Activated B cell treated with CpG ODN at 0.5 μM for 24 hours (primary cell): ENCODE measurements at regions of chr4 and their contacts with region 1.

Region 1: GRCh38 chr4:26319467-26319948 is 1.3 kb upstream of the RBPJ start:
- DNase-seq: peak; percentile 88
- ATAC-seq: peak; percentile 72
- H3K4me3 Mint-ChIP-seq: peak overlapping the region; percentile 99
- H3K27ac Mint-ChIP-seq: peak overlapping the region; percentile 99
- H3K4me1 Mint-ChIP-seq: peaks cover 35% of the 10 kb centered on the region
- H3K27me3 Mint-ChIP-seq: no peaks in the 10 kb centered on the region
- CTCF ChIP-seq: no peak

Region 2: DNA sequence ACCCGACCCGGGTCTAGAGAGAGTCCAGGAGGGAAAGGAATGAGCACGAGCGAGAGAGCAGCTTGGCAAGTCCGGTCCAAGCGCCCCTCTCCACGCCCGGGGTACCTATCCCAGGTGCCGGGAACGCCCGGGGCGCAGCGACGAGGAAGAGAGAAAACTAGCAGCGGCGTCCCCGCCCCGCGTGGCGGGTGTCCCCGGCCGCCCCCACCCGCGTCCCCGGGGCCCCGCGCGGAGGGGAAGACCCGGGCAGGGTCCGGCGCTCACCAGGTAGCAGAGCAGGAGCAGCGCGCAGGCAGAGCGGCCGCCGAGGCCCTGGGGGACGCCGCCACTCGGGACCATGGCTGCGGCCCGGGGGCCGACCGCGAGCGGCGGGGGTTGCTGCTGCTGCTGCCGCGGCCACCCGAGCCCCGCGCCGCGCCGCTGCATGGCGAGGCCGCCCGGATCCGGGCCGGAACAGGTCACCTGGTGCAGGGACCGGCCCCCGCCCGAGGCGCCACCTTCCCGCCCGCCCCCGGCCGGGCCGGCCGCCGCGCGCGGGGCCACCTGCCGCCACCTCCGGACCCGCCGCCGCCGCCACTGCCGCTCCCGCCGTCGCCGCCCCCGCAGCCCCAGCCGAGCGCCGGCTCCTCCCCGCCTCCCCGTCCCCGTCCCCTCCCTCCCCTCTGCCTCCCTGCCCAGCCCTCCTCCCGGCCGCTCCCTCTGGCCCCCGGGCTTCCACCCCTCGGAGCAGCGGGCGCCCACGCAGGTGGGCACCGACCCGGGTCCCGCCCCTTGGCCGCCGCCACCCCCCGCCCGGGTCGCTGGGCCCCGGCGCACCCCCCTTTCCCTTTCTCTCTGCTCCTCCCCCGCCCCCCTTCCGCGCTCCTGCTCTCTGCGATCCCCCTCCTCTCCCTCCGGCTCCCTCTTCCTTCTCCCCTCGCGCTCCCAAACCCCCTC is 456.8 kb before region 1 on chr4 and contains the start of gene SEL1L3:
- CTCF ChIA-PET with region 1: no interaction called
- POLR2A ChIA-PET with region 1: interaction called, 13 read pairs
- intact Hi-C with region 1: loop called (anchors 2 kb)
- DNase-seq: peak; percentile 68
- ATAC-seq: peak; percentile 39
- H3K4me3 Mint-ChIP-seq: peak within 1 kb of the TSS; percentile 98
- H3K27ac Mint-ChIP-seq: peak within 1 kb of the TSS; percentile 99
- H3K4me1 Mint-ChIP-seq: peaks cover 84% of the 10 kb centered on the region
- H3K27me3 Mint-ChIP-seq: no peaks in the 10 kb centered on the region
- CTCF ChIP-seq: no peak
- total RNA-seq, gene SEL1L3: 102 and 113 TPM in 2 replicates

Region 3: DNA sequence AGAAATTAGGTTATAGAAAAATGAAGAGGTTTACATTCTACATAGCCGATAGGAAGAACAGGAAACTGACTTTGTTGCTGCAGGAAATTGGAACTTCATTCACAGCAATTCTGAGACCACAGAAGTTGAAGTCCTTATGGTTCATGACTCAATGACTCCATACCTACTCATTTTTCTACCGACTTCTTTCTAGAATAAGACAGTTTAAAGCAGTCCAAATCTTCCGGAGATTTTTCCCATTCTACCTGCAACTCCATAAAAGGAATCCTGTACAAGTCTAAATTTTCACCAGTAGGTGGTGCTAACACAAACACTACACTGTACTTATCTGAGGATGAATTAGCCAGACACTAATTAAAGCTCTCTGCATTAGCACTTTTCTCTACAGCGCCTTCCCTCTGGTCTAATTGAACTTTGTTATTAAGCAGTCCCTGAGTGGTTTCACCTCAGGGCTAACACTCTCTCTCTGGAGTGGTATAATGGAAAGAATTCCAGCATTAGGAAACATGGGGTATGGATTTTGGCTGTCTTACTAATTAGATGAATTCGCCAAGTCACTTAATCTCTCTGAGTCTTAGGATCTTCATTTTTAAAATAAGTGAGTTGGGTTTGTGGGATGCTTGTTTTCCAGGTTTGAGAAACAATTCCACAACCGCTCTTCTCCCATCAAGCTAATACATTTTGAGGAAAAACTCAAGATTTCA is 237.6 kb before region 1 on chr4:
- CTCF ChIA-PET with region 1: interaction called, 10 read pairs
- POLR2A ChIA-PET with region 1: interaction called, 8 read pairs
- intact Hi-C with region 1: loop called (anchors 1 kb)
- DNase-seq: no peak
- ATAC-seq: peak; percentile 52
- H3K4me3 Mint-ChIP-seq: no peak overlapping the region
- H3K27ac Mint-ChIP-seq: no peak overlapping the region
- H3K4me1 Mint-ChIP-seq: peaks cover 14% of the 10 kb centered on the region
- H3K27me3 Mint-ChIP-seq: peaks cover 3% of the 10 kb centered on the region
- CTCF ChIP-seq: no peak

Region 4: DNA sequence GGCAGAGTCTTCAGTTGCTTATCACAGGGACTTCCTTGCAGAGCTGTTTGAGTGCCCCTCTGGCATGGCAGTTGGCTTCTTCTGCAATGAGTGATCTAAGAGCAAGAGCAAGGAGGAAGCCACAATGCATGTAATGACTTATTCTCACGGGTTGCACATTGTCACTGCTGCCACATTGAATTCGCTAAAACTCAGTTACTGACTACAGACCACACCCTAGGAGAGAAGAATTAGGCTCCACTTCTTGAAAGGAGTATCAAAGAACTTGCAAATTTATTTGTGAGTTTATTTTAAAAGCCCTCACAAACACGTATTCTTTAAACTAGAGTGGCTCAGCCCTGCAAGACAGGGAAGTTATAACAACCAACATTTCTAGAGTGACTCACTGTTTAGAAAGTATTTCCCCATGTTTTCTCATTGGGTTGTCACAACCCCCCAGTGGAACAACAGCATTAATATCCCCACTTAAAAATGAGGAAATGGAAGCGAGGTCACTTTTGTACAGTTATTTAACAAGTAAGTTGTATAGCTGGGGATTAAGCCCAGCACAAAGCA is 31.1 kb before region 1 on chr4:
- CTCF ChIA-PET with region 1: no interaction called
- POLR2A ChIA-PET with region 1: interaction called, 14 read pairs
- intact Hi-C with region 1: loop called (anchors 1 kb)
- DNase-seq: no peak
- ATAC-seq: peak; percentile 80
- H3K4me3 Mint-ChIP-seq: no peak overlapping the region
- H3K27ac Mint-ChIP-seq: peak overlapping the region; percentile 59
- H3K4me1 Mint-ChIP-seq: peaks cover 13% of the 10 kb centered on the region
- H3K27me3 Mint-ChIP-seq: no peaks in the 10 kb centered on the region
- CTCF ChIP-seq: no peak

Region 5: DNA sequence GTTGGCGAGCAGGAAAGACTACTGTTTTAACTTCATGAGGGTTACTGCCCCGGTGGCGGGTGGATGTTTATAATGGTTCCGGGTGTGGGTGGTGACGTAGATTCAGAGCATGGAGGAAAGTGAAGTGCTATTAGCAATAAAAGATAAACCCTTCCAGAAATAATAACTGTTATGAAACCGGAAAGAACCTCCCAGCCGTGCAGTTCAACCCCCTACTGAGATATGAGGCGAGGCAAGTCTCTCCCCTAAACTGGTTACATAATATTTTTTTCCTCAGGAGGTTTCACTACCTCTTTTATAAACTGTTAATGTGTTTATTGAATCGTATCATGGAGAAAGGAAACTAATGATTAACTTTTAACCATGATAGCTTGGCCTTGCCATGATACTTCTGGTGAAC is 507.2 kb after region 1 on chr4:
- CTCF ChIA-PET with region 1: no interaction called
- POLR2A ChIA-PET with region 1: no interaction called
- intact Hi-C with region 1: loop called (anchors 1 kb)
- DNase-seq: peak; percentile 47
- ATAC-seq: peak; percentile 84
- H3K4me3 Mint-ChIP-seq: peak overlapping the region; percentile 59
- H3K27ac Mint-ChIP-seq: peak overlapping the region; percentile 88
- H3K4me1 Mint-ChIP-seq: peaks cover 92% of the 10 kb centered on the region
- H3K27me3 Mint-ChIP-seq: peaks cover 9% of the 10 kb centered on the region
- CTCF ChIP-seq: no peak